ENCODE measurements at regions of chr6 and their contacts with region 1.

Region 1: GRCh38 chr6:149834513-149835481 is 29.4 kb downstream of the LRP11 start:
- DNase-seq: no peak
- H3K4me3 ChIP-seq: no peak overlapping the region
- H3K27ac ChIP-seq: no peak overlapping the region
- H3K4me1 ChIP-seq: no peaks in the 10 kb centered on the region
- H3K27me3 ChIP-seq: no peaks in the 10 kb centered on the region
- CTCF ChIP-seq: peak; percentile 94 to 96 (median 95)
- EP300 ChIP-seq: no peak
- POLR2A ChIP-seq: no peak

Region 2: GRCh38 chr6:149347067-149347466 is 487.7 kb before region 1 on chr6:
- intact Hi-C with region 1: no loop called
- DNase-seq: no peak
- H3K4me3 ChIP-seq: no peak overlapping the region
- H3K27ac ChIP-seq: no peak overlapping the region
- H3K4me1 ChIP-seq: peaks cover 10 to 47% (median 36%) of the 10 kb centered on the region in 4 donors
- H3K27me3 ChIP-seq: no peaks in the 10 kb centered on the region
- CTCF ChIP-seq: no peak
- EP300 ChIP-seq: no peak
- POLR2A ChIP-seq: no peak

Region 3: DNA sequence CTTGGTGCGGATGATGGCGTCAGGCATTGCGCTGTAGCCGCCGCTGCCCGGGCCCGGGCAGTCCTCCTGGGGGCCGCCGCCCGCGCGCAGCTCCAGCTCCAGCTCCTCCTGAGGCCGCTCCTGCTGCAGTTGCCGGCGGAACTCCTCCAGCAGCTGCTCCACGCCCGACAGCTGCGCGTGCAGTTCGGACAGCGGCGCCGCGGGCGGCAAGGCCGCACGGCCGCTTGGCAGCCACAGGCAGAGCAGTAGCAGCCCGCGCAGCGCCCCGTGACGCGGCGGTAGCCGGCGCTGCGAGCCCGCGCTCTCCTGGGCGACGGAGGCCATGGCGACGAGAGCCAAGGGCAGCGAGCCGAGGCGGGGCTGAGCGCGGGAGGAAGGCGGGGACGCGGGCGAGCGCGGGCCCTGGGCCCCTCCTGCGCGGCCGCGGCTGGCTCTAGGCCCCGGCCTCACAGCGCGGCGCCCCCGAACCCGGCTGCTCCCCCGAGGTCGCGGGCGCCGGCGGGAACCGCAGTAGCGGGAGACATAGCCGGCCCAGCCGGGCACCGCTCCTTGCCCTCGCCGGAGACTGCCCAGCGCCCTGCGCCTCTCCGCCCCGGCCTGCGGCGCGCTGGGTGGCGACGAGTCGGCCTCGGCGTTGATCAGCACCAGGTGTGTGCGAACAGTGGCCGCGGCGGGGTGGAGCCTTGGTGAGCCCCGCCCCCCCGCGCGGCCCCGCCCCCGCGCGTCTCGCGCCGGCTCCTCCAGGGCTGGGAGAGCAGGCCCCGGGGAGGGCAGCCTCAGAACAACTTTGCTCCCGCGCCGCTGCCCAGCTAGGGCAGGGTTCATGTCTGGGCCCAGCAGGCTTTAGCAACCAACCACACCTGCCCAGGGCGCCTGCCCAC is 29.1 kb after region 1 on chr6 and contains the start of gene LRP11:
- intact Hi-C with region 1: loop called (anchors 2 kb)
- DNase-seq: peak; percentile 93
- H3K4me3 ChIP-seq: peak within 1 kb of the TSS; percentile 67 to 87 (median 80)
- H3K27ac ChIP-seq: peak within 1 kb of the TSS; percentile 88 to 95 (median 94)
- H3K4me1 ChIP-seq: peaks cover 18 to 31% (median 27%) of the 10 kb centered on the region in 4 donors
- H3K27me3 ChIP-seq: no peaks in the 10 kb centered on the region
- CTCF ChIP-seq: no peak
- EP300 ChIP-seq: no peak
- POLR2A ChIP-seq: no peak
- total RNA-seq, gene LRP11: 15.0 to 29.1 (median 24.0) TPM

Region 4: DNA sequence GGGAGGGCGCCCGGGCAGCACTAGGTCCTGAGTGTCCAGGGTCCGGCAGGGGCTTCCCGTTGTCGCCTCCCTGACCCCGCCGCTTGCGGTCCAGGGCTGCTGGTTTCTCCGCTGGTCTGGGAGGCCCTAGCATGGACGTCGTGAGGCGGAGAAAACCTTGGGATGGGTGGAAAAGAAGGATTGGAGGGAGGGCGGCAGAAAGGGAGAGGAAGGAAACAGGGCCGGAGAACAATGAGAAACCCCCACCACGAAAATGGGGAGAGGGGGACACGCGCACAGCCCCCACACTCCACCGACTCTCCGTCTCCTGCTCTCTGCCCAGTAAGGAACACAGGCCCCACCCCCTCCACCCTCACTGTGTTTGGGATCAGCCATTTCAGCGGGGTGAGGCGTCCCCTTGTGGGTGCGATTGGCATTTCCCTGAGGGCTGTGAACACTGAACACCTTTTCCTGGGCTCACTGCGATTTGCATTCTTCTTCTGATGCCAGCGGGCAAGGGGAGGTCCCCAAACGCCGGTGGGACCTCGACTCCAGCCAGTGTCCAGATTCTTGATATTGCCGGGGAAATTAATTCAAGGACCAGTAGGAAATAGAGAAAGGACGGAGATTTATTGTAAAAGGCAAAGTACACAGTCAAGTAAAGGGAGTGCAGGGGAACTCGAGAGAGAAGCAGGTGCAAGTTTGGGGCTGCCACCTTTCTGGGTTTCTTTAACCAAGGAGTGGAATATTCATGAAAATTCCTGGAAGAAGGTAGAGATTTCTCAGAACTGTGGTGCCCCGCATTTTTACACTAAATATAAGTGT is 91.4 kb after region 1 on chr6:
- intact Hi-C with region 1: loop called (anchors 1 kb)
- DNase-seq: peak; percentile 97
- H3K4me3 ChIP-seq: peak overlapping the region; percentile 53 to 63 (median 58)
- H3K27ac ChIP-seq: peak overlapping the region in 3 of 4 donors; percentile 30 to 63 (median 35)
- H3K4me1 ChIP-seq: peaks cover 20 to 39% (median 34%) of the 10 kb centered on the region in 4 donors
- H3K27me3 ChIP-seq: peaks cover 0 to 43% (median 8%) of the 10 kb centered on the region in 4 donors
- CTCF ChIP-seq: peak in 2 of 3 experiments; percentile 94 to 98
- EP300 ChIP-seq: no peak
- POLR2A ChIP-seq: no peak

Region 5: DNA sequence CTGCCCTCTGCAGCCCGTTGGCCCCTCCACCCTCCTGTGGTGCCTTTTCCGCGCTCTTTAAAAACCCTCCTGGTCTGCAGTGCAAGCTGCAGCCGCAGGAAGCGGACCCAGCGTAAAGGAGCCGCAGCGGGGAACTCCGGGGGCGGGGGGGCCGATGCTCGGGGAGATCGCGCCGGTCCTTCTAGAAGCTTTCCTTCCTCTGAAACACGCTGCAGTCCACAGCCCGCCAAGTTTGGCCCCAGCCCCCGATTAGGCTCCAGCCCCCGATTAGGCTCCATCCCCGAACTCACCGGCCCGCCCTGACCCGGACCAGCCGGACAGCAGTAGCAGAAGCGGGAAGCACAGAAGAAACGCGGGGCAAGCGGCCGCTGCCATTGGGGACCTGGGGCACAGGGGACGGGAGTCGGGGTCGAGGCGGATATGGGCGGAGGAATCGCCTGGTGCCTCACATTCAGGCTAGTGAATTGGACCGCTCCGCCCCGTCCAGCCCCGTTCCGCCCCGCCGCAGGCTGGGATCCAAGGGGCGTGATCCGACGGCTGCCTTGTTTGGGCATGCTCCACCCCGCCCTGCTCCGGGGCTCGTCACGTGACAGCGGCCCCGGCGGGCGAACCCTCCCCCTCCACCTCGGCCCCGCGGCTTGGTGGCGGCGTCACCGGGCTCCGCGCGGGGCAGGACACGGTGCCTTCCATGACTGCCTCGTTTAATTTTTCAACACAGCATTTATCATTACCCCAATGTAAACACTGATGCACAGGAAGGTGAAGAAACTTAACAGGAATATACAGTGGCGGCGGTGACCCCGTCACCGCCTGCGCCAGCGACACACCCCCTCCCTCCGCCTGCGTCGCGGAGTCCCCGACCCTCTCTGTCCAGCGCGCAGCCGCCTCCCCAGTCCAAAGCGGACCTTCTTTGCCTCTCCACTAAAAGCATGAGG is 170.3 kb after region 1 on chr6:
- intact Hi-C with region 1: loop called (anchors 10 kb)
- DNase-seq: peak; percentile 95
- H3K4me3 ChIP-seq: peak overlapping the region; percentile 62 to 69 (median 64)
- H3K27ac ChIP-seq: no peak overlapping the region
- H3K4me1 ChIP-seq: peaks cover 12 to 19% (median 18%) of the 10 kb centered on the region in 4 donors
- H3K27me3 ChIP-seq: peaks cover 0 to 100% (median 15%) of the 10 kb centered on the region in 4 donors
- CTCF ChIP-seq: peak in 2 of 3 experiments; percentile 6 to 21
- EP300 ChIP-seq: no peak
- POLR2A ChIP-seq: no peak